ENCODE measurements at regions of chr17 and their contacts with region 1.

Region 1: GRCh38 chr17:39547713-39548478 is 59.8 kb downstream of the NEUROD2 start:
- DNase-seq: peak in 3 of 4 donors; percentile 49 to 86 (median 67)
- ATAC-seq: peak; percentile 85
- H3K4me3 ChIP-seq: no peak overlapping the region
- H3K27ac ChIP-seq: no peak overlapping the region
- H3K4me1 ChIP-seq: no peaks in the 10 kb centered on the region
- H3K27me3 ChIP-seq: no peaks in the 10 kb centered on the region
- CTCF ChIP-seq: peak; percentile 89 to 95

Region 2: GRCh38 chr17:39621523-39622379 is 73.9 kb after region 1 on chr17:
- intact Hi-C with region 1: loop called in 1 of 2 experiments (anchors 5 kb)
- DNase-seq: peak; percentile 83 to 96 (median 88)
- ATAC-seq: peak; percentile 88
- H3K4me3 ChIP-seq: no peak overlapping the region
- H3K27ac ChIP-seq: peak overlapping the region in 1 of 2 donors; percentile 8
- H3K4me1 ChIP-seq: peaks cover 0 to 35% of the 10 kb centered on the region in 2 donors
- H3K27me3 ChIP-seq: peaks cover 5 to 62% of the 10 kb centered on the region in 2 donors
- CTCF ChIP-seq: peak; percentile 99 to 100

Measured in left lung (tissue), 14 donors.